ENCODE measurements at regions of chr6 and their contacts with region 1.

Region 1: GRCh38 chr6:136289579-136290409 is at the start of gene BCLAF1:
- DNase-seq: peak; percentile 100
- H3K4me3 ChIP-seq: peak within 1 kb of the TSS; percentile 98
- H3K27ac ChIP-seq: peak within 1 kb of the TSS; percentile 97 to 100
- H3K4me1 ChIP-seq: peaks cover 9% of the 10 kb centered on the region
- H3K27me3 ChIP-seq: no peaks in the 10 kb centered on the region
- CTCF ChIP-seq: peak in 1 of 3 donors; percentile 11
- EP300 ChIP-seq: peak; percentile 99
- POLR2A ChIP-seq: peak; percentile 99
- total RNA-seq, gene BCLAF1: 108 to 184 (median 168) TPM

Region 2: DNA sequence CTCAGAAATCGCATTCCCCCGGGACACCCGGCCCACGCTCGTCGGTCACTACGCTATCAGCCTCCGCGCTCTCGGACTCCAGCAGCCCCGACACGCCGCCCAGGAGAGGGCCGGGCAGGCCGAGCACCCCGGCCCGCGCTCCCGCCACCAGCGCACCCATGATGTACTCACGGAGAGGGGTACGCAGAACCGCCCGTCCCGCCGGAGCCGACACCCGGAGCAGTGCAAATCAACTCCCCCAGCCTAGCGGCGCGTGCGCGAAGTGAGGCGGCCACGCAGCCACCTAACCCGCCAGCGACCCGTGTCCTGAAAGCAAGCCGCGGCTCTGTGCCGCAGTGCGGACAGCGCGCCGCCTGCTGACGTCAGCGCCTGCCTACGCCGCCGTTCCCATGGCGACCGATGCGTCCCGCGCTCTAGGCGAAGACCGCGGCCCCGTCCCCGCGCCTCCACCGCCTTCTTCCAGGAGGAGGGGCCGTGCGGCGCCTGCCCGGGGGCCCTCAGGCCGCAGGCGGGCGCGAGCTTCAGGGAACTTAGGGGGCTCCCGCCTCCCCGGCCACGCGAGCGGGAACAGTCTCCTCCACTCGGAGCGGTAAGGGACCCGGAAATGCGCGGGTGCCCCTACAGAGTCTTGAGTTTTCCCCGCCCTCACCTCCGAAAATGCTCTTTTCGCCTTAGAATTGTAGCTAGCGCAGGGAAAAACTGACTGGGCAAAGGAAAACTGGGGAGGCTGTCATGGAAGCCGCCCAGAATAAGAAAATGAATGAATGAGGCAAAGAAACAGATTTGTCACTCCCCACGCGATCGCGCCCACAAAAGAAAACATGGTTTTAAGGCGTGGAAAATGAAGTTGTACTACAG is 792.2 kb before region 1 on chr6 and contains the start of gene AHI1:
- intact Hi-C with region 1: loop called in 1 of 4 experiments (anchors 2 kb)
- DNase-seq: peak; percentile 94 to 96 (median 94)
- H3K4me3 ChIP-seq: peak within 1 kb of the TSS; percentile 73
- H3K27ac ChIP-seq: peak within 1 kb of the TSS; percentile 92 to 96
- H3K4me1 ChIP-seq: peaks cover 2% of the 10 kb centered on the region
- H3K27me3 ChIP-seq: no peaks in the 10 kb centered on the region
- CTCF ChIP-seq: peak in 2 of 3 donors; percentile 56 to 63
- EP300 ChIP-seq: peak; percentile 72
- POLR2A ChIP-seq: peak; percentile 90
- total RNA-seq, gene AHI1: 25.8 to 56.2 (median 32.9) TPM

Measured in ovary (tissue), 10 donors.